Psoas muscle (tissue), 8 donors: ENCODE measurements at regions of chr11 and their contacts with region 1.

Region 1: GRCh38 chr11:34114471-34114870 is 9.0 kb downstream of the NAT10 start:
- DNase-seq: no peak
- ATAC-seq: peak; percentile 31 to 78 (median 70)
- H3K4me3 ChIP-seq: no peak overlapping the region
- H3K27ac ChIP-seq: no peak overlapping the region
- H3K4me1 ChIP-seq: no peaks in the 10 kb centered on the region
- H3K27me3 ChIP-seq: no peaks in the 10 kb centered on the region
- CTCF ChIP-seq: no peak

Region 2: GRCh38 chr11:34075178-34075820 is 39.2 kb before region 1 on chr11:
- intact Hi-C with region 1: loop called in 1 of 2 experiments (anchors 5 kb)
- DNase-seq: no peak
- ATAC-seq: no peak
- H3K4me3 ChIP-seq: no peak overlapping the region
- H3K27ac ChIP-seq: no peak overlapping the region
- H3K4me1 ChIP-seq: peaks cover 10% of the 10 kb centered on the region
- H3K27me3 ChIP-seq: no peaks in the 10 kb centered on the region
- CTCF ChIP-seq: no peak